ENCODE measurements at regions of chr17 and their contacts with region 1.

Region 1: GRCh38 chr17:22286337-22287041 is 594.2 kb downstream of the KCNJ18 start:
- DNase-seq: no peak
- ATAC-seq: no peak
- H3K4me3 Mint-ChIP-seq: no peak overlapping the region
- H3K27ac Mint-ChIP-seq: no peak overlapping the region
- H3K4me1 Mint-ChIP-seq: no peaks in the 10 kb centered on the region
- H3K27me3 Mint-ChIP-seq: no peaks in the 10 kb centered on the region

Region 2: DNA sequence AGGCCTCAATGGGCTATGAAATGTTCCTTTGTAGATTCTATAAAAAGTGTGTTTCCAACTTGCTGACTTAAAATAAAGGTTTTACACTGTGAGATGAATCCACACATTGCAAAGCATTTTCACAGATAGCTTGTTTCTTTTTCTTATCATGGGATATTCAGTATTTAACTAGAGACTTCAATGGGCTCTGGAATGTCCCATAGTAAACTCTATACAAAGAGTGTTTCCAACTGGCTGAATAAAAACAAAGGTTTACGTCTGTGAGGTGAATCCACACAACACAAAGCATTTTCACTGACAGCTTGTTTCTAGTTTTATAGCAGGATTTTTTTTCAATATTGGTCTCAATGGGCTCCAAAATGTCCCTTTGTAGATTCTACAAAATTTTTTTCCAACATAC is 44.0 kb before region 1 on chr17:
- CTCF ChIA-PET with region 1: no interaction called
- POLR2A ChIA-PET with region 1: no interaction called
- intact Hi-C with region 1: loop called in 1 of 2 experiments (anchors 10 kb)
- DNase-seq: no peak
- ATAC-seq: no peak
- H3K4me3 Mint-ChIP-seq: no peak overlapping the region
- H3K27ac Mint-ChIP-seq: no peak overlapping the region
- H3K4me1 Mint-ChIP-seq: no peaks in the 10 kb centered on the region
- H3K27me3 Mint-ChIP-seq: no peaks in the 10 kb centered on the region

Measured in activated CD4-positive, alpha-beta T cell treated with anti-CD3 and anti-CD28 coated beads for 36 hours (primary cell).